HepG2 (cell line): ENCODE measurements at regions of chr2 and their contacts with region 1.

Region 1: GRCh38 chr2:76977484-76978400 is 544.4 kb downstream of the LRRTM4 start:
- DNase-seq: no peak
- ATAC-seq: no peak
- H3K4me3 ChIP-seq: no peak overlapping the region
- H3K27ac ChIP-seq: no peak overlapping the region
- H3K4me1 ChIP-seq: no peaks in the 10 kb centered on the region
- H3K27me3 ChIP-seq: no peaks in the 10 kb centered on the region
- CTCF ChIP-seq: no peak
- EP300 ChIP-seq: no peak
- POLR2A ChIP-seq: no peak
- RAD21 ChIP-seq: no peak

Region 2: GRCh38 chr2:76895469-76895868 is 82.3 kb before region 1 on chr2:
- CTCF ChIA-PET with region 1: no interaction called
- POLR2A ChIA-PET with region 1: no interaction called
- in situ Hi-C with region 1: no loop called
- intact Hi-C with region 1: no loop called
- DNase-seq: peak; percentile 82
- ATAC-seq: peak; percentile 98
- H3K4me3 ChIP-seq: no peak overlapping the region; a peak in 1 of 6 replicates
- H3K27ac ChIP-seq: no peak overlapping the region
- H3K4me1 ChIP-seq: peaks cover 9% of the 10 kb centered on the region
- H3K27me3 ChIP-seq: no peaks in the 10 kb centered on the region
- CTCF ChIP-seq: no peak
- EP300 ChIP-seq: peak in 1 of 2 experiments; percentile 70; a peak in 1 of 4 replicates
- POLR2A ChIP-seq: no peak
- RAD21 ChIP-seq: no peak

Region 3: GRCh38 chr2:77169426-77169825 is 191.7 kb after region 1 on chr2:
- CTCF ChIA-PET with region 1: no interaction called
- POLR2A ChIA-PET with region 1: no interaction called
- in situ Hi-C with region 1: no loop called
- intact Hi-C with region 1: no loop called
- DNase-seq: no peak
- ATAC-seq: no peak
- H3K4me3 ChIP-seq: no peak overlapping the region
- H3K27ac ChIP-seq: no peak overlapping the region
- H3K4me1 ChIP-seq: no peaks in the 10 kb centered on the region
- H3K27me3 ChIP-seq: no peaks in the 10 kb centered on the region
- CTCF ChIP-seq: no peak
- EP300 ChIP-seq: no peak
- POLR2A ChIP-seq: no peak
- RAD21 ChIP-seq: no peak

Region 4: DNA sequence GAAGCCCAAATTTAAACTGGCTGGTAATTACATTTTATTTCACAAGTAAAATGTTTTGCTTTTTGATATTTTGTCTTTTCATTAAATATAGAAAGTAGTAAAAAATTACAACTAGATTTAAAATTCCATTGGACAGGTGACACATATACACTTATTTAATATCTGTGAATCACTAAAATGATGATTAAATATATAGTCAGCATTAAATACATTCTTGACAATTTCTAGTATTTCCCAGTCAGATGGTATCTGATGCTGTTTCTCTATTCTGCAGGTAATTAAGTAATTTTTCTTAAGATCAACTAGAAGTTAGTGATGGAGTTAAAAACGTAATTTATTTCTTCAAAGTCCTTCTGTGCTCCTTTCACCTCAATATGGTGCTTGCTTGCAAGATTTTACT is 306.6 kb after region 1 on chr2:
- CTCF ChIA-PET with region 1: no interaction called
- POLR2A ChIA-PET with region 1: no interaction called
- in situ Hi-C with region 1: loop called (anchors 10 kb)
- intact Hi-C with region 1: no loop called
- DNase-seq: no peak
- ATAC-seq: no peak
- H3K4me3 ChIP-seq: no peak overlapping the region
- H3K27ac ChIP-seq: no peak overlapping the region
- H3K4me1 ChIP-seq: no peaks in the 10 kb centered on the region
- H3K27me3 ChIP-seq: no peaks in the 10 kb centered on the region
- CTCF ChIP-seq: no peak
- EP300 ChIP-seq: no peak
- POLR2A ChIP-seq: no peak
- RAD21 ChIP-seq: no peak